Calu3 (cell line): ENCODE measurements at regions of chr7 and their contacts with region 1.

Region 1: DNA sequence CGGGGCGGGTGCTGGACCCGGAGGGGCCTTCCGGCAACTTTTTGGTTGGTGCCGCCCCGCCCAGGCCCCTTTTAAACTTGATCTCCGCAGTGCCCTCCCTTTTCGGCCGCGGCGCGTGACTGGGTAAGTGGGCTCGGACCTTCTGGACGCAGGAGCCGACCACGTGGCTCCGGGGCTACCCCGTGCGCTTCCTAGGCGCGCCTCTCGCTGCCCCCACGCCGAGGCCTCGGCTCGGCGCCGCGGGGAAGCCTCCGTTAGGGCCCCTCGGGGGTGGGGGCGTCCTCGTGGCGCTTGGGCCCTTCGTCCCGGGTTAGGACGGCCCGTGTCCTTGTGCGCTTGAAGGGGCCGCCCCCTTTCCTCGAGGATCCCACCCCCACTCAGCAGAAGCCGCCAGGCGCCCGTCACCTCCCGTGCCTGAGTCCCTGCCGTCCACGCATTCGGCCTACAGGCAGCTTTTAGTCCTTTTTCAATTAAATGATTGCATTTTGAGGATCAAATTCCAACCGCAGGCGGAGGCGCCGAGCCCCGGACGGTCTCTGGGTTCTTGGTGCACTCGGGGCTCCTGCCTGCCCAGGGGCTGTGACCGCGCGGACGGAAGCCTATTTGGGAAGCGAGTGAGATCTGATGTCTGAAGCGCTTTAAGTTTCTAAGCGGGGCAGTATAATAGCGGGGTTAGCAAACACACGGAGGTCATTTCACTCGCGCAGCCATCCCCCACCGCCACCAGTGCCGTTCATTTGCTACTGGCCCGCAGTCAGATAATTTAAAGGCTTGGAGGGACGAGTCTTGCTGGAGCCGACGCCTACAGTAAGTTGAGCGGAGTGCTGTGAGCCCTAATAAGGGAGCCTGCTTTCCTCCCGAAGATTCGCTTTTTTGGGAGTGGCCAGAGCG is 31.8 kb upstream of the TOMM7 start:
- DNase-seq: peak; percentile 86
- H3K4me3 Mint-ChIP-seq: peak overlapping the region; percentile 89
- H3K27ac Mint-ChIP-seq: peak overlapping the region; percentile 67
- H3K4me1 Mint-ChIP-seq: peaks cover 14% of the 10 kb centered on the region
- H3K27me3 Mint-ChIP-seq: peaks cover 22% of the 10 kb centered on the region
- CTCF ChIP-seq: peak; percentile 99

Region 2: DNA sequence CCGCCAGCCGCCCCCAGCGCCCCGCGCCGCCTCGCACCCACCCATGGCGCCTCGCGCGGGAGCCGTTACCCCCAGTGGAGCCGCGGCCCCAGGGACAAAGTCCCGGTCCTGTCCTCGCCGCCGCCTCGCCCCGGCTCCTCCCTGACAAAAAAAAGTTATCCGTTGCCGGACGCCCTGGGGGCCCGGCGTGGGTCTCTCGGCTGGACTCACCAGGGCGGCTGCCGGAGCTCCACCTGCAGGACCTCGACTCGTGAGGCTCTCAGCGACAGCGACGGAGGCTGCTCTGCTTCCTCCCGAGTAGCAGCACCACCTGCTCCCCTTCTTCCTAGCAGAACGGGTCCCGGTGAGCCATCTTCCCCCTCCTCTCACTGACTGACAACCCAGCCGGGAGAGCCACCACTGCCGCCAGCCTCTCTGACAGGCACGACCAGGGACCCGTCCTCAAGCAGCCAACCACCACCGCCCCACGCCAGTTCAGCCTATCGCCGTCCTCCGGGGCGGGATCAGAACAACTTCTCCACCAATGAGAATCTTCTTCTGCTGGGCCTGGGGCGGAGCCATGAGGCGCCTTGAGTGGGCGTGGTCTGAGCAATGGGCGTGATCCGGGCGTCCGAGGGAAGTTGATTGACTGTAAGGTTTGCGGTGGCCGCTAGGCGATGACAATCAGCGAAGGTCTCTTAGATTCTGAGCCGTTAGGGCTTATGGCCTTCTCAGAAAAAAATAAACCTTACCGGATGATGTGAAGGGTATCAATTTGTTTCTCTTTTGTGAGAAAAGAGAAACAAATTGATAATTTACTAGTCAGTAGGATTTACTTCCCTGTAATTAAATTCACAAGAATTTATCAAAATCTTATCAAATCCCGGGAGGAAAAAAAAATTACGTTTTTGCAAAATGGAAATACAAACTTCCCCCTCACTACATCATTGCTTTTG is 159.6 kb after region 1 on chr7 and contains the start of gene HYCC1:
- CTCF ChIA-PET with region 1: interaction called, 4 read pairs
- intact Hi-C with region 1: loop called (anchors 1 kb)
- DNase-seq: peak; percentile 100
- H3K4me3 Mint-ChIP-seq: no peak within 1 kb of the TSS
- H3K27ac Mint-ChIP-seq: peak within 1 kb of the TSS; percentile 77
- H3K4me1 Mint-ChIP-seq: peaks cover 18% of the 10 kb centered on the region
- H3K27me3 Mint-ChIP-seq: no peaks in the 10 kb centered on the region
- CTCF ChIP-seq: peak; percentile 63
- total RNA-seq, gene HYCC1: 12.7 and 14.2 TPM in 2 replicates